ENCODE measurements at regions of chr5 and their contacts with region 1.

Region 1: DNA sequence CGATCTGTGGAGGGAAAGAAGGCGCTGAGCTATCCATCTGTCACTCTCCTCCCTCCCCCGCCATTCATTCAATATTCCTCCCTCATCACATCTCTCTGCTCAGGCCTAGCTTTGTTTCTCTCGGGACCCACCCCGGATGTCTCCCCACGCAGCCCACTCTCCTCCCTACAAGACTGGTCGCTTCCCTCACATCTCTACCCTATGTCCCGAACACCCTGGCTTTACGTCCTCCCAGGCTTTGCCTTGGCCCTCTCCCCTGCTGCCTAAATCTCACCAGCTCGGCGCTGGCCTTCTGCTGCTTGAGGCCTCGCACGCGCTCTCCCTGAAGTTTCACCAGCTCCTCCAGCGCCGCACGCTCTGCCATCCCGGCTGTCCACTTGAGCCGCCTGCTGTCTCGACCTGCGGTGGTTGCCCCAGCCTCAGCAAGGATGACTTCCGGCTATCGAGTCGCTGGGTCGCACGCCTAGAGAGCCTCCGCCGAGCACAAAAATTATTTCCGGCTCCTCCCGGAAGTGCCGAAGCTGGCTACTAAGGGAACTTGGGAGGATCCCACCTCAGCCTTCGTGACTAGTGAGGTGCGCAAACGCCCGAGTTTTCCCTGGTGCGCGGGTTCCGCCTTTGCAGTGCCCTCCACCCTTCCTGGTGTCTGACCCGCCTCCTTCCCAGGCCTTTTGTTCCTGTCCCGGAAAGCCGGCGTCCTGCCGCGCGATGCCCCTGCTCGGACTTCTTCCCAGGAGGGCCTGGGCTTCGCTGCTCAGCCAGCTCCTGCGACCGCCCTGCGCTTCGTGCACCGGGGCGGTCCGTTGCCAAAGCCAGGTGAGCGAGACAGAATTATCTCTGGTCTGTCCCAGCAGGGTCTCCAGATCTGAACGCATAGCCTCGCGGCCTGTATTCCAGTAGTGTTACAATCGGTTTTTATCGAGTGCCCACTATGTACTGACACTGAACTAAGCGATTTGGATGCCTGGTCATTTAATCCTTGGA is at the starts of genes HARS1 and HARS2:
- DNase-seq: peak; percentile 89
- ATAC-seq: peak; percentile 94
- H3K4me3 Mint-ChIP-seq: peak within 1 kb of the TSS; percentile 99
- H3K27ac Mint-ChIP-seq: peak within 1 kb of the TSS; percentile 97
- H3K4me1 Mint-ChIP-seq: peaks cover 34% of the 10 kb centered on the region
- H3K27me3 Mint-ChIP-seq: no peaks in the 10 kb centered on the region
- CTCF ChIP-seq: no peak
- total RNA-seq, gene HARS1: 84.5 to 84.9 TPM
- total RNA-seq, gene HARS2: 26.1 TPM

Region 2: GRCh38 chr5:140357726-140358093 is 333.5 kb before region 1 on chr5:
- CTCF ChIA-PET with region 1: no interaction called
- POLR2A ChIA-PET with region 1: no interaction called
- intact Hi-C with region 1: no loop called
- DNase-seq: peak; percentile 88
- ATAC-seq: peak; percentile 99
- H3K4me3 Mint-ChIP-seq: peak overlapping the region; percentile 49
- H3K27ac Mint-ChIP-seq: peak overlapping the region; percentile 31
- H3K4me1 Mint-ChIP-seq: peaks cover 13% of the 10 kb centered on the region
- H3K27me3 Mint-ChIP-seq: peaks cover 9% of the 10 kb centered on the region
- CTCF ChIP-seq: peak; percentile 73

Region 3: DNA sequence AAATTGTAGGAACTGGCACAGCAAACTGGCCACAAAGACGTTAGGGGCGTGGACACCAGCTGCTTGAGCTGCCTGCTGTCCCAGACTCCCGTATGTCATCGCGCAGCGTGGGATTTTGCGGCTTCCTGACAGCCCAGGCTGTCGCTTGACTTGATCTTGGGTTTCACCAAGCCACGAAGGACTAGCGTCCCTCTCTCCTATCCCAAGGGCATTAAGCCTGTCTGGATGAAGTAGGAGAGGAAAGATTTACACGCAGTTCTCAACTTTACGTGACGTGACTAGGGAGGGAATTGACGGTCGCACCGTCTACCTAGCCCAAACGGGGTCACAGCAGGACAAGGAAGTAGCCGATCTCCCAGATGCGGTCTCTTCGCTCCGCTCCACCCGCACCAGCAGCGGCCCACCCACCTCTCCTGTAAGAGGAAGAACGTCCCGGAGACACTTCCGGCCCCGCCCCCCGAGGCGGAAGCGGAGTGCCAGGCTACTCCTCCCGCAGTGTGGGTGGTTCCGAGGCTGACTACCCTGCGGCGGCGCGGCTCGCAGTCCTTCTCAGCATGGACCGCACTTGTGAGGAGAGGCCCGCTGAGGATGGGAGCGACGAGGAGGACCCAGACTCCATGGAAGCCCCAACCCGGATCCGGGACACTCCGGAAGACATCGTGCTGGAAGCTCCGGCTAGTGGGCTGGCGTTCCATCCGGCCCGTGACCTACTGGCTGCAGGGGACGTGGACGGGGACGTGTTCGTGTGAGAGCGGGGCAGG is 26.7 kb before region 1 on chr5 and contains the start of gene WDR55:
- CTCF ChIA-PET with region 1: interaction called, 5 read pairs
- POLR2A ChIA-PET with region 1: interaction called, 24 read pairs
- intact Hi-C with region 1: no loop called
- DNase-seq: peak; percentile 97
- ATAC-seq: peak; percentile 96
- H3K4me3 Mint-ChIP-seq: peak within 1 kb of the TSS; percentile 99
- H3K27ac Mint-ChIP-seq: peak within 1 kb of the TSS; percentile 95
- H3K4me1 Mint-ChIP-seq: peaks cover 26% of the 10 kb centered on the region
- H3K27me3 Mint-ChIP-seq: no peaks in the 10 kb centered on the region
- CTCF ChIP-seq: no peak
- total RNA-seq, gene WDR55: 30.1 to 31.8 TPM

Region 4: DNA sequence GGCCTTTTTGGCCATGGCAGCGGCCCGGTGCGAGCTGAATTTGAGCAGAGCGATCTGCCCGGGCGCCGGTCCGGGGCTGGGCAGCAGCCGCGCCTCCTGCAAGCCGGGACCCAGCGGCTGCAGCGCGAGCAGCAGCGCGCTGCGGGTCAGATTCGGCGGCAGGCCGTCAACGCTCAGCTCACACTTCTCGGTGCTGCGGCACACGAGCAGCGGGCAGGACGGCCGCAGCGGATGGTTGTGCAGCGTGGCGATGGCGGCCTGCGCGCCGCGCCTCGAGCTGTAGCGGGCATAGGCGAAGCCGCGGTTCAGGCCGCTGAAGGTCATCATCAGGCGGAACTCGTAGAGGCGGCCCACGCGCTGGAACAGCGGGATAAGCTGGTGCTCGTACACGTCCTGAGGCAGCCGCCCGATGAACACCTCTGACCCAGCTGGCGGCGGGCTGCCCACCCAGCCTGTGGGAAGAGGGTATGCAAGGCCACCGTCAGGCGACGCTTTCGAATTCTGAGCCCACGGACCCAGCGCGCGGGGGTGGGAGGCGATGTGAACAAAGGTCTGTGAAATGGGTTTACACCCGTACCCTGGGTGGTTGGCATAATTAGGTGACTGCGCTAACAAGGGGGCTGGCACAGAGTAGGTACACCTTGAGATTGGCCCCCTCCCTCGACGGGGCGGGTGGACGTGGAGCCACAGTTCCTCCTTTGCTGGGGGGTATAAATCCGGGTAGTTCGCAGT is 18.6 kb before region 1 on chr5:
- CTCF ChIA-PET with region 1: interaction called, 4 read pairs
- POLR2A ChIA-PET with region 1: interaction called, 24 read pairs
- intact Hi-C with region 1: no loop called
- DNase-seq: peak; percentile 33
- ATAC-seq: no peak
- H3K4me3 Mint-ChIP-seq: no peak overlapping the region
- H3K27ac Mint-ChIP-seq: no peak overlapping the region
- H3K4me1 Mint-ChIP-seq: peaks cover 4% of the 10 kb centered on the region
- H3K27me3 Mint-ChIP-seq: no peaks in the 10 kb centered on the region
- CTCF ChIP-seq: no peak

Region 5: DNA sequence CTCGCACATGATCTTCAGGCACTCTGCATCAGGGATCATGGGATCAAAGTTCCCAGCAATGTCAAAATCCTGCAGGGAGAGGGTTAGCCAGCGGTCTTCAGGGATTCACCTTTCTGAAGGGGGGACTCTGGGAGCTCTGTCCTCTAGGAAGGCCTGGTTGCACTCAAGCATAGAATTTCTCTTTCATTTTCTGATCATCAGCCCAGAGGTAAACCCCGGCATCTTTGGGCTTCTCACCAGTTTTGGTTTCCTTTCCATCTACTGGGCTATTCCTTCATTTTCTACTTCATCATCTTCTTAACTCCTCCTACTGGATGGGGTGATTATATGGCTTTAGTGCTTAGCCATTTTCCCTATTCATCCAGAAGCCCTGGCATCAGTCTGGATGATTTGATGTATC is 13.3 kb before region 1 on chr5:
- CTCF ChIA-PET with region 1: interaction called, 4 read pairs
- POLR2A ChIA-PET with region 1: interaction called, 23 read pairs
- intact Hi-C with region 1: no loop called
- DNase-seq: no peak
- ATAC-seq: no peak
- H3K4me3 Mint-ChIP-seq: no peak overlapping the region
- H3K27ac Mint-ChIP-seq: peak overlapping the region; percentile 2
- H3K4me1 Mint-ChIP-seq: peaks cover 1% of the 10 kb centered on the region
- H3K27me3 Mint-ChIP-seq: no peaks in the 10 kb centered on the region
- CTCF ChIP-seq: no peak

Region 6: GRCh38 chr5:140806834-140807775 is 115.9 kb after region 1 on chr5 and contains the start of gene PCDHA4:
- CTCF ChIA-PET with region 1: no interaction called
- POLR2A ChIA-PET with region 1: no interaction called
- intact Hi-C with region 1: no loop called
- DNase-seq: peak; percentile 43
- ATAC-seq: no peak
- H3K4me3 Mint-ChIP-seq: no peak within 1 kb of the TSS
- H3K27ac Mint-ChIP-seq: no peak within 1 kb of the TSS
- H3K4me1 Mint-ChIP-seq: no peaks in the 10 kb centered on the region
- H3K27me3 Mint-ChIP-seq: peaks cover 22% of the 10 kb centered on the region
- CTCF ChIP-seq: no peak
- total RNA-seq, gene PCDHA4: not detected